PC-3 (cell line): ENCODE measurements at regions of chr19 and their contacts with region 1.

Region 1: DNA sequence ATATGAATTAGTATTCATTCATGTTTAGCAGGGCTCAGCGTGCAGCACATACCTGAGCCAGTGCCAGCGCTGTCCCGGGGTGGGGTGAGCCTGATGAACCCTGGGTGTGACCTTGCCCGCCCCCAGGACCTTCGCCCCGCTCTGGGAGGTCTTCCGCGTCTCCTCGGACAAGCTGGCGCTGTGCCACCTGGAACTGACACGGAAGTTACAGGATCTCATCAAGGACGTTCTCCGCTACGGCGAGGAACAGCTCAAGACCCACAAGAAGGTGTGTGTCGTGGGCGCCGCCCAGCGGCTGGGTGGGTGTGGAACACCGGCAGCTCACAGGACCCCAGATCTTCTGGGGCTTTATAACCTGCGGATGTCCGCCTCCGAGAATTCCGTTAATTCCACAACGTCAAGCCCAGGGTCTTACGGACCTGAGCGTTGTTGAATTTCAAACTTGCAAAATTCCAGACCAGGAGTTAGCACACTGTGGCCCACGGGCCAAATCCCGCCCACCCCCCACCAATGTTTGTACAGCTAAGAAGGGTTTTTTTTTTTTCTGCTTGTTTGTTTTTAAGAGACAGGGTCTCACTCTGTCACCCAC is 15.4 kb downstream of the FCHO1 start:
- DNase-seq: peak; percentile 90
- ATAC-seq: peak; percentile 83
- H3K4me3 ChIP-seq: peak overlapping the region; percentile 52
- H3K27ac ChIP-seq: no peak overlapping the region
- H3K4me1 ChIP-seq: peaks cover 9% of the 10 kb centered on the region
- H3K27me3 ChIP-seq: no peaks in the 10 kb centered on the region
- CTCF ChIP-seq: peak; percentile 95

Region 2: GRCh38 chr19:17605761-17606745 is 160.6 kb before region 1 on chr19:
- CTCF ChIA-PET with region 1: interaction called, 11 read pairs
- POLR2A ChIA-PET with region 1: no interaction called
- intact Hi-C with region 1: no loop called
- DNase-seq: peak; percentile 58
- ATAC-seq: peak; percentile 78
- H3K4me3 ChIP-seq: peak overlapping the region; percentile 43; the same call in 1 of the 2 replicates
- H3K27ac ChIP-seq: no peak overlapping the region
- H3K4me1 ChIP-seq: 0 out of 2 replicates have a peak, but pooled peaks cover 6% of the 10 kb centered on the region
- H3K27me3 ChIP-seq: peaks cover 18% of the 10 kb centered on the region
- CTCF ChIP-seq: peak; percentile 58

Region 3: DNA sequence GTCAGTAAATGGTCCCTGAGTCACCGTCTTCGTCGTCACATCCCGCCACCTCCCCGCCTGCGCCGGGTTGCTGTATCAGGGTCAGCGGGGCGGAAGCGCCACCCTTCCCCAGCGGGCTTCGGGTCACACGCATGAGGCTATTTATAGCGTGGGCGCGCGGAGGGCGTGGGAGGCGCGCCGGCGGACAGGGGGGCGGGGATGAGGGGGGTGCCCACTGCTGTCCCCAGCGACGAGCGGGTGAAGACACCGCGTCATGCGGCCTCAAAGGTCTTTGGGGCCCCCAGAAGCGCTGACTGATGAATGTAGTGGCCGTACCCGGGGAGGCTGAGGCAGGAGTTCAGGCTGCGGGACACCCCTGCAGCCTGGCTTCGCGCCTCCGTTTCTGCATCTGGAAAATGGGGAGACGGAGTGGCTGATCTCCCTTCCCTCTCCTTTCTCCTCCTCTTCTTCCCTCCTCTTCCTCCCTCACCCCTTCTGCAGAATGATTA is 86.4 kb before region 1 on chr19:
- CTCF ChIA-PET with region 1: no interaction called
- POLR2A ChIA-PET with region 1: no interaction called
- intact Hi-C with region 1: no loop called
- DNase-seq: peak; percentile 51
- ATAC-seq: peak; percentile 84
- H3K4me3 ChIP-seq: peak overlapping the region; percentile 50
- H3K27ac ChIP-seq: no peak overlapping the region
- H3K4me1 ChIP-seq: peaks cover 10% of the 10 kb centered on the region
- H3K27me3 ChIP-seq: 0 out of 2 replicates have a peak, but pooled peaks cover 10% of the 10 kb centered on the region
- CTCF ChIP-seq: no peak

Region 4: DNA sequence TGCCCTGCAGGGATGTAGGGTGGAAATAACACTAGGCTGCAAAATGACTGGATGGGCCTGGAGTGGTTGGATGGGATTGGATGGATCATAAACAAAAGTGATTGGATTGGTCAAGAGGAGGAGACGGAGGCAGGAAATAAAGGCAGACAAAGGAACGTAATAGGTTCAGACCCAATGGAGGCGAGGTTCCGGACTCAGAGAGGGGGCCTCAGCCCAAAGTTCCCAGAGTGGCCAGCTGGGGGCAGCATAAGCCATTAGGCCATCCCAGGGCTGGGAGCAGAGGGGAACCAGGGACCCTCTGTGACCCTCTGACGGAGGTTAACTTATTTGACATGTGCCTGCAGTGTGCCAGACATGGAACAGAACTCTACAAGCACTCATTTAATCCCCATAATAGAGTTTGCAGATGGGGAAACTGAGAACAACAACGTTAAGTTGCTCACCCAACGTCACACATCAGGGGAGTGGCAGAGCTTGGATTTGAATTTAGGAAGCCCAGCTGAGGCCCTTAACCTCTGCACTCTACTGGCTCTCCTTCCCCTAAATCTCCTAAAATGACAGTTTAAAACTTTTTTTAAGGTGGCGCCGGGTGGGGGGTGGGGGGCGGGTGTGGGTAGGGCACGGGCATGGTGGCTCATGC is 62.7 kb before region 1 on chr19:
- CTCF ChIA-PET with region 1: no interaction called
- POLR2A ChIA-PET with region 1: no interaction called
- intact Hi-C with region 1: loop called (anchors 1 kb)
- DNase-seq: peak; percentile 52
- ATAC-seq: peak; percentile 45; the same call in 1 of the 2 replicates
- H3K4me3 ChIP-seq: no peak overlapping the region
- H3K27ac ChIP-seq: no peak overlapping the region
- H3K4me1 ChIP-seq: no peaks in the 10 kb centered on the region
- H3K27me3 ChIP-seq: 0 out of 2 replicates have a peak, but pooled peaks cover 2% of the 10 kb centered on the region
- CTCF ChIP-seq: peak; percentile 80

Region 5: GRCh38 chr19:18063463-18063862 is 296.8 kb after region 1 on chr19:
- CTCF ChIA-PET with region 1: no interaction called
- POLR2A ChIA-PET with region 1: no interaction called
- intact Hi-C with region 1: no loop called
- DNase-seq: peak; percentile 43
- ATAC-seq: no peak; the same call in 1 of the 2 replicates
- H3K4me3 ChIP-seq: no peak overlapping the region
- H3K27ac ChIP-seq: no peak overlapping the region
- H3K4me1 ChIP-seq: 0 out of 2 replicates have a peak, but pooled peaks cover 3% of the 10 kb centered on the region
- H3K27me3 ChIP-seq: no peaks in the 10 kb centered on the region
- CTCF ChIP-seq: peak; percentile 36; the same call in 1 of the 2 replicates